ENCODE measurements at regions of chr14 and their contacts with region 1.

Region 1: DNA sequence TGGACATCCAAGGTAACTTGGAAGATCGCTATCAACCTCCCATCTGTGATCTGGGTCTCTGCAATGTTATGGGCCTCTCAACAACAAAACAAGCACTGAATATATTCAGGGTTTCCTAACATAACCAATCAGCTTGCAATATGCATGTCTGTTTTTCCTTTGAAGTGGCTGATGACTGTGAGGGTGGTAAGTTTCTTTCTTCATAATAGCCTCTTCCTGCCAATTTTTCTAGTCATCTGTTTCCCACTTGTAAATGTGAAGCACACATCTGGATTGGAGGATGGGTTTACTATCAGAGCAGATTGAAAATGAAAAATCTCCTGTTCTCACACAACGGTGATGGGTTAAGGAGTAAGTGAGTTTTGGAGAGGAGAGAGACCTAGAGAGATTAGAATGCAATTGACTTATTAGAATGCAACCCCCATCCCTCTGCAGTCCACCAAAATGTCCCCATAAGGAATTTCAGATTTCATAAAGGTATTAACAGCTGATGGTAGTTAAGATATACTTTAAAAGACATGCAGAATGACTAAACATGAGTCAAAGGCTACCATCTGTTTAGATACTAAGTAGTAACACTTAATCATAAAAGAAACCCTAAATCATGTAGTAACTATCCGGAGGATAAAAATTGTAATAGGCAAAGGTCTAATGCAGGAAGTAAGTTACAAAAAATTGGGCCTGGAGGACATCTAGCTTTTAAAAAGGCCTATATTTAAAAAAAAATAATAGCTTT is 58.4 kb upstream of the SAV1 start:
- DNase-seq: peak; percentile 84
- H3K4me3 Mint-ChIP-seq: peak overlapping the region; percentile 51
- H3K27ac Mint-ChIP-seq: peak overlapping the region; percentile 88
- H3K4me1 Mint-ChIP-seq: peaks cover 24% of the 10 kb centered on the region
- H3K27me3 Mint-ChIP-seq: no peaks in the 10 kb centered on the region

Region 2: DNA sequence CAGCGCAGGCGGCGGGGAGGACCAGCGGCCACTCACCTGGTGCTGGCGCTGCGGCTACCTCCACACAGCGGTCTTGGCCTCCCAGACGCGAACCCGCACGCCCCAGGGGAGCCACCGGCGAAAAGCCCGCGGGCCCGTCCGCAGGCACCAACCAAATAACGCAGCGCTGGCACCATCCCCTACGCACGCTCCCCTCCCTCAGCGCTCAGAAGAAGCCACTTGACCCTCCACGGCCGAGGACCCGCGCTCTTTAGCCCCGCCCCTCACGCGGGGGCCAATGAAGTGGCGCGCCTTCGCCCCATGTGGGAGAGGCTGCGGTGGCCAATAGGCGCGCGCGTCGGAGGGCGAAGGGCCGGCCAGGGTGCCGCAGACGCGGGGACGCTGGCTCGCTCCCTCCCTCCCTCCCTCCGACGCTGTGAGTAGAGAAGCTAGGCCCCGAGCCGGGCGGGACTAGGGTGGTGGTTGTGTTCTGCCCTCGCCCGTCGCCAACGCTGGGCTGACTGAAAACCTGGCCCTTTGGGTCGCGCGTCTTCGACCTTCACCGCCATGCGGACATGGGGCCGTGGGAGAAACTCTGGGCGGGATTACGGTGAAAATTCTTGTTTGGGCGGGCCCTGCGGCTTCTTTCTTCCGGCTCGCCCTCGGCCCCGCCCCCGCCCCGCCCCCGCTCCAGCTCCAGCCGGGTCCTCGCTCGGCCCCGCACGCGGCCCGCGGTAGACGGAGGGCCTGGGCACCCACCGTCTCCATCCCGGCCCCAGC is 414.4 kb before region 1 on chr14 and contains the starts of genes DMAC2L and L2HGDH:
- intact Hi-C with region 1: loop called (anchors 5 kb)
- DNase-seq: peak; percentile 98
- H3K4me3 Mint-ChIP-seq: peak within 1 kb of the TSS; percentile 96
- H3K27ac Mint-ChIP-seq: peak within 1 kb of the TSS; percentile 99
- H3K4me1 Mint-ChIP-seq: peaks cover 39% of the 10 kb centered on the region
- H3K27me3 Mint-ChIP-seq: no peaks in the 10 kb centered on the region
- total RNA-seq, gene DMAC2L: 16.3 and 18.8 TPM in 2 replicates
- total RNA-seq, gene L2HGDH: 16.8 and 18.0 TPM in 2 replicates

Region 3: GRCh38 chr14:50607181-50607580 is 119.4 kb before region 1 on chr14:
- intact Hi-C with region 1: loop called (anchors 1 kb)
- DNase-seq: no peak
- H3K4me3 Mint-ChIP-seq: no peak overlapping the region
- H3K27ac Mint-ChIP-seq: peak overlapping the region; percentile 7
- H3K4me1 Mint-ChIP-seq: peaks cover 7% of the 10 kb centered on the region
- H3K27me3 Mint-ChIP-seq: peaks cover 24% of the 10 kb centered on the region

Region 4: GRCh38 chr14:50647282-50647681 is 79.3 kb before region 1 on chr14:
- intact Hi-C with region 1: no loop called
- DNase-seq: no peak
- H3K4me3 Mint-ChIP-seq: no peak overlapping the region
- H3K27ac Mint-ChIP-seq: no peak overlapping the region
- H3K4me1 Mint-ChIP-seq: no peaks in the 10 kb centered on the region
- H3K27me3 Mint-ChIP-seq: no peaks in the 10 kb centered on the region

Region 5: DNA sequence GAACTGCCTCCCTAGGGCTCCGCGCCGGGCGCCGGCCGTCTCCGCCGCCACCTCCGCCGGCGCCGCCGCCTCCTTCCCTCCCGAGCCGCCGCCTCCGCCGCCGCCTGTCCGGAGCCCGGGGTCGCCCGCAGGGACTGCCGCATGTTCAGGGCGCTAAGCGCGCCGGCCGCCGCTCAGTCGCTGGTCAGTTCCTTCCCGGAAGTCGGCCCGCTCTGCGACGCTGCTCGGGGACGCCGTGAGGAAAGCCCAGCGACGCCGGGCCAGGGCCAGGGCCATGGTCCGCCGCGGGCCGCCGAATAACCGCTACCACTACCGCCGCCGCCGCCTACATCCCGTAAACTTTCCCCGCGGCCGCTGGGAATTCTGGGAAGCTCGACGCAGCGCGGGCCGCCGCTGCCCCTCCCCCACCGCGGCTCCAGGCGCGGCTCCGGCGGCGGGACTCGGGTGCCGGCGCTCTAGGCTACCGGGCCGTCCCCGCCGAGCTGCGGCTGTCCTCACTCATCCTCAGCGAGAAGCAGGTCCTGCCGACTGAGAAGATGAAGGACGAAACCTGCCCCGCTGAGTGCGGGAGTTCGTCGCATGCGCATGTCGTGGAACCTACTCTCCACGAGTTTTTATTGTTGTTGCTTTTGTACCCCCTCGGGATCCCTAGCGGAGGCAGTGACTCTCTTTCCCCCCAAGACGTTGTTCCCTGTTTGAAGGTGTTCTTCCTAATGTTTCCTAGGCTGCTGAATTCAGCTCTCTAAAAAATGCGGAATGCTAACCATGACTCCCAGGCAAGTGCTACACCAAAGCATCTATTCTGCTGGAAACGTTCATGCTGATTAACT is 58.3 kb before region 1 on chr14 and contains the start of gene SAV1:
- intact Hi-C with region 1: loop called (anchors 1 kb)
- DNase-seq: peak; percentile 84
- H3K4me3 Mint-ChIP-seq: no peak within 1 kb of the TSS
- H3K27ac Mint-ChIP-seq: peak within 1 kb of the TSS; percentile 50
- H3K4me1 Mint-ChIP-seq: peaks cover 13% of the 10 kb centered on the region
- H3K27me3 Mint-ChIP-seq: peaks cover 2% of the 10 kb centered on the region
- total RNA-seq, gene SAV1: 9.9 and 10.8 TPM in 2 replicates

Region 6: GRCh38 chr14:50736932-50737419 is 10.4 kb after region 1 on chr14:
- intact Hi-C with region 1: loop called (anchors 1 kb)
- DNase-seq: peak; percentile 74
- H3K4me3 Mint-ChIP-seq: peak overlapping the region; percentile 45
- H3K27ac Mint-ChIP-seq: peak overlapping the region; percentile 73
- H3K4me1 Mint-ChIP-seq: peaks cover 34% of the 10 kb centered on the region
- H3K27me3 Mint-ChIP-seq: no peaks in the 10 kb centered on the region

Region 7: GRCh38 chr14:50762001-50762930 is 35.7 kb after region 1 on chr14:
- intact Hi-C with region 1: loop called (anchors 1 kb)
- DNase-seq: no peak
- H3K4me3 Mint-ChIP-seq: no peak overlapping the region
- H3K27ac Mint-ChIP-seq: peak overlapping the region; percentile 72
- H3K4me1 Mint-ChIP-seq: peaks cover 23% of the 10 kb centered on the region
- H3K27me3 Mint-ChIP-seq: no peaks in the 10 kb centered on the region

Measured in activated CD4-positive, alpha-beta T cell treated with anti-CD3 and anti-CD28 coated beads, Interleukin-2, amount 10 ng/mL, durations not matched to agents 24 days and 14 days (primary cell).